ENCODE measurements at regions of chr1 and their contacts with region 1.

Region 1: GRCh38 chr1:48061162-48062136 is 64.3 kb upstream of the TRABD2B start:
- DNase-seq: peak; percentile 32 to 62
- ATAC-seq: peak; percentile 91 to 92
- H3K4me3 ChIP-seq: no peak overlapping the region
- H3K27ac ChIP-seq: no peak overlapping the region
- H3K4me1 ChIP-seq: no peaks in the 10 kb centered on the region
- H3K27me3 ChIP-seq: no peaks in the 10 kb centered on the region
- CTCF ChIP-seq: peak; percentile 63 to 74 (median 66)
- POLR2A ChIP-seq: no peak

Region 2: GRCh38 chr1:47738560-47739182 is 322.8 kb before region 1 on chr1:
- in situ Hi-C with region 1: loop called in 3 of 4 experiments (anchors 10 to 25 kb)
- intact Hi-C with region 1: loop called (anchors 1 kb)
- DNase-seq: peak in 1 of 2 donors; percentile 23
- ATAC-seq: peak; percentile 56 to 74
- H3K4me3 ChIP-seq: no peak overlapping the region
- H3K27ac ChIP-seq: no peak overlapping the region
- H3K4me1 ChIP-seq: no peaks in the 10 kb centered on the region
- H3K27me3 ChIP-seq: peaks cover 0 to 3% (median 0%) of the 10 kb centered on the region in 3 donors
- CTCF ChIP-seq: peak; percentile 31 to 76 (median 55)
- POLR2A ChIP-seq: no peak

Region 3: DNA sequence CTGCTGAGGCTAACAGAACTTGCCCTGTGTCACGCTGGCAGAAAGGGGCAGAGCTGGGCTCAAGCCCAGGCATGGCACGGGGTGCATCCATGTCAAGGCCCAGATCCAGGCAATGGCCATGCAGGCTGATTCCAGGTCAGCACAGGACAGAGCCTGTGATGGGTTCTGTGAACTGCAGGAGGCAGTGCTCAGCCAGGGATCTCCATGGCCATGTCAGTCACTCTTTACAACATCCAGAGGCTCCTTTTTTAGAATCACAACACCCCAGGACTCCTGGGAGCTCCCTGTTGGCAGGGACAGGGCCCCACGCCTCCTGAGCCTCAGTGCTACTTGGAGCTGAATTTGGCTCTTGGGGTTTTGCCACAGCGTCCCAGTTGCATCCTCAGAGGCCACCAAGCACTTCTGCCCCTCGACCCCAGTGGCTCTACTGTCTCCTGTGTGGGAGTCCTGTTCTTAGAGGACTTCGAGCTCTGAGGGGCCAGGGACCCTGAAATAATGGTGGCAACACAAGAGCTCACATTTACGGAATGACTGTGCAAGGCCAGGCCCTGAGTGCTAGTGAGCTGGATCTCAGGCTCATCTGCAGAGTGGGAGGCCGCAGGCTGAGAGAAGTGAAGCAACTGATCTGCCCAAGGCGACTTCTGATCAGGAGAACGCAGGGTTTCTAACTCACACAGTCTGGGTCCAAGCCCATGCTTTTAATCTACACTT is 275.7 kb before region 1 on chr1:
- in situ Hi-C with region 1: no loop called
- intact Hi-C with region 1: loop called (anchors 1 kb)
- DNase-seq: peak; percentile 40 to 60
- ATAC-seq: peak; percentile 81 to 85
- H3K4me3 ChIP-seq: no peak overlapping the region
- H3K27ac ChIP-seq: peak overlapping the region in 3 of 4 donors; percentile 53 to 57 (median 57)
- H3K4me1 ChIP-seq: peaks cover 24 to 54% of the 10 kb centered on the region in 2 donors
- H3K27me3 ChIP-seq: no peaks in the 10 kb centered on the region
- CTCF ChIP-seq: peak in 4 of 5 experiments; percentile 28 to 48 (median 43)
- POLR2A ChIP-seq: no peak

Region 4: DNA sequence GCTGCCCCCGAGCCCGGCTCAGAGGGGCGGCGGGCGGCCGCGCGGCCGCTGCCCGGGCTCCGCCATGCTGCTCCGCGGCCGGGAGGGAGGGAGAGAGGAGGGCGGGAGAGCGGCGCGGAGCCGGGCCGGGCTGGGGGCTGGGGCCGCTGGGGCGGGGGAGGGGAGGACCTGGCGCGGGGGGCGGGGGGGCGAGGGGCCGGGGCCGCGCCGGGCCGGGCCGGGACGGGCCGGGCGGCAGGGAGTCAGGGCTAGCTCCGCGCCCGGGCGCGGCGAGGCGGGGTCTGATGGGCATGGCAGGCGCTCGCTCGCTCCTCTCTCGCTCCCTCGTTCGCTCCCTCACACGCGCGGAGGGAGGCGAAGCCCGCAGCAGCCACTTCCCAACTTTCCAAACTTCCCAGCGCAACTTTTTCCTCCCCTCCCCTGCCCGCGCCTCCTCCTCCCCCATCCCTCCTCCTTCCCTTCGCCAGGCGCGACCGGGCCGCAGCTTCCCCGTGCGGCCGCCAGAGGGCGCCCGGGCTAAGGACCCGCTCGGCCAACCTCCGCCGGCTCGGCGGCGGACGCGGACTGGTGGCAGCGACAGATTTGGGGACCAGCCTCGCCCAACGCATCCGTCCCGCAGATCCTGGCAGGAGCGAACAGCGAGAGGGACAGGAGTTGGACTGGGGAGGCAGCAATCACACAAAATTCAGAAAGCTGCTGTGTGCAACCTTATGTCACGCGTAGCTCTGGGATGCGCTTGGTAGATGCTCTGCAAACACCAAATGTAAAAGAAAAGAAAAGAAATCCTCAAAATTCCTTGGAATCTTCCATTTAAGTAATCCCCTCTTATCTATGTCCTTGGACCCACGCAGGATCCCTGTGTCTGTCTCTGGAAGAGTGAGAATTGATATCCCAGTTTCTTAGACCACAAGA is 63.9 kb before region 1 on chr1 and contains the start of gene TRABD2B:
- in situ Hi-C with region 1: loop called (anchors 5 to 10 kb)
- intact Hi-C with region 1: loop called (anchors 1 kb)
- DNase-seq: peak; percentile 51 to 65
- ATAC-seq: peak; percentile 83 to 86
- H3K4me3 ChIP-seq: peak within 1 kb of the TSS; percentile 52 to 60 (median 57)
- H3K27ac ChIP-seq: peak within 1 kb of the TSS; percentile 41 to 63 (median 53)
- H3K4me1 ChIP-seq: peaks cover 3 to 8% of the 10 kb centered on the region in 2 donors
- H3K27me3 ChIP-seq: peaks cover 12 to 22% (median 22%) of the 10 kb centered on the region in 3 donors
- CTCF ChIP-seq: peak; percentile 81 to 98 (median 92)
- POLR2A ChIP-seq: no peak
- total RNA-seq, gene TRABD2B: 0.05 to 0.15 (median 0.12) TPM

Region 5: GRCh38 chr1:48026275-48026674 is 35.2 kb before region 1 on chr1:
- in situ Hi-C with region 1: no loop called
- intact Hi-C with region 1: no loop called
- DNase-seq: peak; percentile 56 to 74
- ATAC-seq: peak; percentile 96 to 97
- H3K4me3 ChIP-seq: no peak overlapping the region
- H3K27ac ChIP-seq: peak overlapping the region; percentile 15 to 81 (median 76)
- H3K4me1 ChIP-seq: peaks cover 7 to 16% of the 10 kb centered on the region in 2 donors
- H3K27me3 ChIP-seq: no peaks in the 10 kb centered on the region
- CTCF ChIP-seq: no peak
- POLR2A ChIP-seq: no peak

Measured in gastrocnemius medialis (tissue), 4 donors.